GM10248 (cell line): ENCODE measurements at regions of chr14 and their contacts with region 1.

Region 1: DNA sequence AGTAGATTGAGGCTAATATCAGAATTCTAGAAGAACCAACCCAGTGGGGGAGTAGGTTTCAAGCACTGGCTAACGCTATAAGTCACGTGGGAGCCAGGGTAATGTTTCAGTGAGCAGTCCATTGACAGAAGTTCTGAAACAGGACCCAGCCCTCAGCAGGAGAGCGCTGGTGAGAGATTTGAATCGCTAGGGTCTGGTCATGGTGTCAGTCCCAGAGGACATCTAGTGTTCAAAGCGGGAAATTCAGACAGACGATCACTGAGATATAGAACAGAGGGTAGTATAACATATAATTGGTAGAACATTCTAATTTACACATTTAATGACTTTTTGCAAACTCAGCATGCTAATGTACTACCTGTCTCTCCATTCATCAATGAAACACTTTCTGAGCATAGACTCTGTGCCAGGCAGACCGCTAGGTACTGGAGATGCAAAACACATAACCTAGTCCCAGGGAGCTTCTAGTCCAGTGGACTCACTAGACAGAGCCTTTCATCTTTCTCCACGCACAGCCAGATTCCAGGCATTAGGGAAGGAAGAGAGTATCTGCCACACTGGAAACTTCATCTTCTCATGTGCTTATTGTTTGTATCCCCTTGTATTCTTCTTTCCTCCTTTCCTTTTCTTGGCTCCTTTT is 35.4 kb upstream of the RNASE3 start:
- DNase-seq: peak; percentile 67
- CTCF ChIP-seq: peak; percentile 68

Region 2: GRCh38 chr14:20682435-20683124 is 173.2 kb before region 1 on chr14:
- CTCF ChIA-PET with region 1: interaction called, 14 read pairs
- POLR2A ChIA-PET with region 1: no interaction called
- DNase-seq: peak; percentile 84
- CTCF ChIP-seq: no peak

Region 3: DNA sequence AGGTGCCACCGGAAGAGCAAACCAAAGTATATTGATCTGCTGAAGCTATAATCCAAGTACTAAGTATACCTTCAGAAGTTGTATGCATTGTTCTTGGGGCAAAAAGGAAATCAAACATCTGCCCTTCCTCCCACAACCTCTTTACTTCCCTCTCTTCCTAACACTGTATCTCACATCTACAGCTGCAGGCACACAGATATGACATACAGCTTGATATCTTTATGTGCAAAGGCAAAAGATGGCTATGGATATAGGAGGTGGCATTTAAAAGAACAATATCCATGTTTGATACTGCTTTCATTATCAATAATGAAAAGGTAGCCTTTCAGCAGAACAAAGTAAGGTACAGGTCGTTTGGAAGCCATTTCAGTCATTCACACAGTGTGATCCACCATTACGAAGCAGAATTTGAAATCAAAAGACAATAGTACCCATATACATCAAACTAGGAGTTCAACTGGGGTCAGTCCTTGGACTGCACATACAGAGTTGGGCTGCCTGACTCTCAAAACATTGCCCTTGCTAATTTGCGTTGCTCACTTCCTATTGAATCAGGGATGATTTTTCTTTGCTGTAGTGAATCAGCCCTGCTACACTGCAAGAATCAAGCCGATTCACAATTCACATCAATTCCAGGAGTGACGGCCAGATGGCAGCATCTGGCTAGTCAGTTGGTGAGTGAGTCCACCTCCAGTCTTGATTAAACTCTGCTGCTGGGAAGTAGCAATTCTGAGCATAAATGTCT is 158.3 kb before region 1 on chr14:
- CTCF ChIA-PET with region 1: interaction called, 128 read pairs
- POLR2A ChIA-PET with region 1: no interaction called
- DNase-seq: peak; percentile 61
- CTCF ChIP-seq: peak; percentile 84

Region 4: DNA sequence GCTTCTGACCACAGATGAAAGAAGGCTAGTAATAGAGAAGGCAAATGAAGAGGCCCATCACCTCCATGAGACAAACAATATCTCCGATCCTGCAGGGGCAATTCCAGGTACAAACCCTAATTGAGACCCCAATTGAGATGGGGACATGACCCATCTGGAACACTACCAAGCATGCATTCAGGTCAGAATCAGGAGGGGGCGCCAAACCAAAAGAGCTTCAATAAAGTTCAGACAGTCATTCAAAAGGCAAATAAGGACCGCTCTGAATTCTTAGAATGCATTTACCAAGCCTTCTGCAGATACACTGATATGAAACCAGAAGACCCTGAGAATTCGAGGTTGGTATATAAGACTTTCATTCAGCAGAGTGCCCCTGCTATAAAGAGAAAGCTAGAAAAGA is 97.8 kb before region 1 on chr14:
- CTCF ChIA-PET with region 1: interaction called, 18 read pairs
- POLR2A ChIA-PET with region 1: no interaction called
- DNase-seq: peak; percentile 37
- CTCF ChIP-seq: peak; percentile 54

Region 5: DNA sequence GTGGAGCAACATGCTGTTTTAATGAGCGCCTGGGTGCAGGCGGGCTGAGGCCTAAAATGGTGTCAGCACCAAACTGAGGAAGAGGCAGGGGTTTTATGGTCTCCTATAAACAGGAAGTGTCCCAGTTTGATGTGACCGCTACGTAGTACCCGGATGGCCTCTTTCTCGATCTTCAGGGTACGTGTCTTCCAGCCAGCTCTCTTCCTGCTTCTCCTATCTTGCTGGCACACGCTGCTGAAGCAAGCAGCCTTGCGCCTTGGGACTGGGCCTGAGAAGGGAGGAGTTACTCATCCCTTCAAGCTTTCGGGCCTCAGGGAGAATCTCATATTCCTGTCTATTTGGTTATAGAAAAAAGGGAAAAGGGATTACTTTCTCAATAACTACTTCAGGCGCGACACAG is 24.9 kb before region 1 on chr14:
- CTCF ChIA-PET with region 1: no interaction called
- POLR2A ChIA-PET with region 1: no interaction called
- DNase-seq: no peak
- CTCF ChIP-seq: no peak

Region 6: GRCh38 chr14:20873370-20874177 is 17.8 kb after region 1 on chr14:
- CTCF ChIA-PET with region 1: interaction called, 39 read pairs
- POLR2A ChIA-PET with region 1: no interaction called
- DNase-seq: peak; percentile 62
- CTCF ChIP-seq: peak; percentile 79